Activated CD4-positive, alpha-beta T cell treated with anti-CD3 and anti-CD28 coated beads, Interleukin-2, amount 10 ng/mL, durations not matched to agents 24 days and 14 days (primary cell): ENCODE measurements at regions of chr3 and their contacts with region 1.

Region 1: DNA sequence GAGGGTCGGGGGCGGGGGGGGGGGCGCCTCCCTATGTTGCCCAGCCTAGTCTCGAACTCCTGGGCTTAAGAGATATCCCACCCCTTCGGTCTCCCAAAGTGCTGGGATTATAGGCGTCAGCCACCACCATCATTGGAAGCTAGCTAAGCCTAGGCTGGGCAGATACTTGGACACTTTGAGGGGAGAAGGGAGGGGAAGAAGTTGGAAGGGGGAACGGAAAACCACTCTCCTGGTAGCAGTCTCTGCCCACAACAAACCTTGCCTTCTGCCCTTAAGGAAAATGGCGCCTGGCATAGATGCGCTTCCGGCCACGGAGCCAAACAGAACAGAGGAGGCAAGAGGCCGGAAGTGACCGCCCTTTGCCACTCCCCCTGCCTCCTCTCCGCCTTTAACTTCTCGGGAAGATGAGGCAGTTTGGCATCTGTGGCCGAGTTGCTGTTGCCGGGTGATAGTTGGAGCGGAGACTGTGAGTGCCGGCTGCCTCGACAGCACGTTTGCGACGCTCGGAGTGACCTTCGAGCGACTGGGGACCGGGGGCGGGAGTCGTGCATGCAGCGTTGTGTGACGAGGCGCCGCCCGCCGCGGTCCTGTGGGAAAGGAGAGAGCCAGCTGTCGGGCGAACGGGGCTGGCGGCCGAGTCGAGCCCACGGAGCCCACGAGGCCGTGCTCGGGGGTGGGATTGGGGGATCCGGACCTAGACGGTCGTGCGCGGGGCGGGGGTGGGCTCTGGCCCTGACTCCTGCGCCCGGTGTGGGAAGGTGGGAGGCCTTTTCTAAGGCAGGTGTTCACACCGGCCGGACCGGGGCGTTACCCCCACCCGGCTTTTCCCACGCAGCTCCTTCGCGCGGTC is at the start of gene MFN1:
- DNase-seq: peak; percentile 97
- H3K4me3 Mint-ChIP-seq: peak within 1 kb of the TSS; percentile 100
- H3K27ac Mint-ChIP-seq: peak within 1 kb of the TSS; percentile 98
- H3K4me1 Mint-ChIP-seq: peaks cover 14% of the 10 kb centered on the region
- H3K27me3 Mint-ChIP-seq: no peaks in the 10 kb centered on the region
- total RNA-seq, gene MFN1: 36.2 and 37.0 TPM in 2 replicates

Region 2: DNA sequence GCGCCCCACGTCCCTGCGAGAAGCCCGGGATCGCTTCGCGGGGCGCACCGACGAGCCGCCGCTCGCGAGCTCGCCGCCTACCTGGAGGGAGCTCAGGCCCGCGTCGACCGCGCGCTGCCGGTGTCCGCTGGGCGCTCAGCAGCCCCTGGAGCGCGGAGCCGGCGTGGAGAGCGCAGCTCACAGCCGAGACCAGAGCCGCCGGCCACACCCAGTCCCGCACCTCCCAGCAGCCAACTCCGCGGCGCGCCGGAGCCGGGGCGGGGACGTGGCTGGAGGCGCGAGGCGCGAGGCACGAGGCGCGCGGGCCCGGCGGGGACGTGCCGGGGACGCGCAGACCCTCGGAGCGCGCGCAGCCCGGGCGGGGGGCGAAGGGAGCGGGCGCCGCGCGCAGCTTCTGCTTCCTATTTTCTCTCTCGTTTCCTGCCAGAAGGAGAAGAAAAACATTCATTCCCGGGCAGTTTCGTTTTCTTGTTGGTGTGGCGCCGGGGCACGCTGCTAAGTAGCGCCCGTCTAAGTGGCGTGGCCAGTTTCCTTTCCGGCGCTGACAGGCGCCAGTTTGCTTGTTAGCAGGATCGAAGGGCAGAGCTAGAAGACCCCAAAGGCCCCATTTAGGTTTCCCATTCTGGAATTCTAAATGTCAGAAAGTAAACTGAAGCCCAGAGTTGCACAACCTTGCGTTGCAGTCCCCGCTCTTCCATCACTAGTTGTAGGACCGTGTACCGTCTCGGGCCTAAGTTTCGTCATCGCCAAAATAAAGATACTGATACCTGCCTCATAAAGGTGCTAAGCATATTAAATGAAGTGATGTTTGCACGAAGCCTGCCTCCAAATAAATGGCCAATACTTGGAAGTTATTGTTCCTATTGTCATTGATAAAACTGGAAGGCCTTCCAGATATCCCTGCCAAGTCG is 104.0 kb after region 1 on chr3 and contains the start of gene GNB4:
- intact Hi-C with region 1: loop called (anchors 1 kb)
- DNase-seq: peak; percentile 90
- H3K4me3 Mint-ChIP-seq: peak within 1 kb of the TSS; percentile 85
- H3K27ac Mint-ChIP-seq: peak within 1 kb of the TSS; percentile 87
- H3K4me1 Mint-ChIP-seq: peaks cover 30% of the 10 kb centered on the region
- H3K27me3 Mint-ChIP-seq: peaks cover 68% of the 10 kb centered on the region
- total RNA-seq, gene GNB4: 11.8 and 14.0 TPM in 2 replicates